ENCODE measurements at regions of chr4 and their contacts with region 1.

Region 1: DNA sequence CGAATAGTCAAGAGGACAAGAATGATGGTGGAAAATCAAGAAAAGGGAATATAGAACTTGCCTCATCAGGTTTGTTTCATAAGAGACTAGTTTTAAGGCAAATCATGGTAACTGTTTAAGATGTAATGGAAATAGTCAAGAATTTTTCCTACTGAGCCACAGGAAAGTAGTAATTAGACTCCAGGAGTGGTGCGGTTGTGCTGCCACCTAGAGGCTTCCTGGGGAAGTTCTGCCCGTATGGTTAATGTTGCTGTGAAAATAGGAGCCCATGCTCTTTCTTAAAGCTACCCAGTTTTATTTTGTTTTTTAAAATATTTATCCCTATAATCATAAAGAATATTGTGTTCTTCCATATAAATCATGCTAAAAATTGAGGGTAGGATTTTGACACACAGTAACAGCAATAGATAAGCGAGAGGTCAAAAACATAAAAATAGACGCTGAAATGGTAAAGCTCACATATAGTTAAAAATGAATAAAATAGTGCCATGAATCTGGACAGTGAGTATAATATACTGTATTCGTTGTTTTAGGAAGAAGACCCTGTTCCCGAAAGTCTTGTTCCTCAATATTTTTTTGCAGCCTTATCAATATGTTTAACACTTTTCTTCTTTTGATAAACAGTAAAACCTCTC is 87.0 kb downstream of the PHOX2B start:
- DNase-seq: peak in 1 of 2 experiments; percentile 78
- H3K4me3 ChIP-seq: no peak overlapping the region
- H3K27ac ChIP-seq: no peak overlapping the region
- H3K4me1 ChIP-seq: no peaks in the 10 kb centered on the region
- H3K27me3 ChIP-seq: no peaks in the 10 kb centered on the region
- CTCF ChIP-seq: peak; percentile 74 to 85 (median 80)
- EP300 ChIP-seq: no peak
- POLR2A ChIP-seq: no peak
- RAD21 ChIP-seq: peak; percentile 91 to 92

Region 2: GRCh38 chr4:41622787-41623186 is 38.8 kb before region 1 on chr4:
- CTCF ChIA-PET with region 1: interaction called, 12 read pairs
- POLR2A ChIA-PET with region 1: no interaction called
- DNase-seq: no peak
- H3K4me3 ChIP-seq: no peak overlapping the region
- H3K27ac ChIP-seq: no peak overlapping the region
- H3K4me1 ChIP-seq: peaks cover 7 to 17% (median 14%) of the 10 kb centered on the region in 4 experiments
- H3K27me3 ChIP-seq: no peaks in the 10 kb centered on the region
- CTCF ChIP-seq: no peak
- EP300 ChIP-seq: peak in 1 of 2 experiments; percentile 49; a peak in 1 of 3 replicates
- POLR2A ChIP-seq: no peak
- RAD21 ChIP-seq: no peak

Region 3: DNA sequence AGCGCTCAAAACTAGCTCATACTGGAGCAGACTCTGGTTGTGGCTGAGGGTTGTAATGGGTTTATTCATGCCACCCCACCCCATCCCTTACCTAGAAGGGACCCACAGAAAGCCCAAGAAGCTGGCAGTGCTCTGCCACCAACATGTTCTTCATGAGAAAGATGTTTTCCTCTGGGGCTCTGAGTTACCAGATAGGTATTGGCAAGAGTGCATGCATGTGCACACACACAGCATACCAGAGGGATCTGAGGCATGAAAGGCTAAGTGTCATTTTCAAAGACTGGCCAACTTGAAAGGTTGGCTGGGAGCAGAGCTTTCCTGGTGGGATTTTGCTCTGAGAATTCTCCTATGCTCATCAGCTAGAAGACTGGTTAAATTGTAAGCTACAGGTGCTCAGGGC is 21.8 kb after region 1 on chr4:
- CTCF ChIA-PET with region 1: interaction called, 15 read pairs
- POLR2A ChIA-PET with region 1: no interaction called
- DNase-seq: no peak
- H3K4me3 ChIP-seq: no peak overlapping the region
- H3K27ac ChIP-seq: no peak overlapping the region
- H3K4me1 ChIP-seq: no peaks in the 10 kb centered on the region
- H3K27me3 ChIP-seq: no peaks in the 10 kb centered on the region
- CTCF ChIP-seq: no peak
- EP300 ChIP-seq: no peak
- POLR2A ChIP-seq: no peak
- RAD21 ChIP-seq: no peak

Region 4: GRCh38 chr4:41725254-41725653 is 63.7 kb after region 1 on chr4:
- CTCF ChIA-PET with region 1: no interaction called
- POLR2A ChIA-PET with region 1: no interaction called
- DNase-seq: peak in 1 of 2 experiments; percentile 69
- H3K4me3 ChIP-seq: no peak overlapping the region
- H3K27ac ChIP-seq: no peak overlapping the region
- H3K4me1 ChIP-seq: no peaks in the 10 kb centered on the region
- H3K27me3 ChIP-seq: peaks cover 0 to 4% (median 2%) of the 10 kb centered on the region in 4 experiments; a peak in 3 of 7 replicates
- CTCF ChIP-seq: peak in 2 of 3 experiments; percentile 59 to 64; a peak in 3 of 4 replicates
- EP300 ChIP-seq: no peak
- POLR2A ChIP-seq: no peak
- RAD21 ChIP-seq: peak; percentile 79 to 81

Region 5: GRCh38 chr4:42008011-42008786 is 346.6 kb after region 1 on chr4:
- CTCF ChIA-PET with region 1: no interaction called
- POLR2A ChIA-PET with region 1: no interaction called
- DNase-seq: no peak
- H3K4me3 ChIP-seq: no peak overlapping the region
- H3K27ac ChIP-seq: no peak overlapping the region
- H3K4me1 ChIP-seq: no peaks in the 10 kb centered on the region
- H3K27me3 ChIP-seq: no peaks in the 10 kb centered on the region
- CTCF ChIP-seq: no peak
- EP300 ChIP-seq: no peak
- POLR2A ChIP-seq: no peak
- RAD21 ChIP-seq: no peak

Measured in H1 (cell line).